ENCODE measurements at regions of chr13 and their contacts with region 1.

Region 1: GRCh38 chr13:25085125-25085742 is 10.7 kb upstream of the PABPC3 start:
- DNase-seq: no peak
- ATAC-seq: peak; percentile 91
- H3K4me3 ChIP-seq: no peak overlapping the region; the same call in 1 of the 2 replicates
- H3K27ac ChIP-seq: no peak overlapping the region
- H3K4me1 ChIP-seq: 0 out of 2 replicates have a peak, but pooled peaks cover 3% of the 10 kb centered on the region
- H3K27me3 ChIP-seq: no peaks in the 10 kb centered on the region; a peak in 1 of 4 replicates
- CTCF ChIP-seq: peak; percentile 62 to 75 (median 75)
- EP300 ChIP-seq: no peak
- POLR2A ChIP-seq: no peak
- RAD21 ChIP-seq: peak; percentile 81

Region 2: GRCh38 chr13:25032160-25032559 is 53.1 kb before region 1 on chr13:
- CTCF ChIA-PET with region 1: no interaction called
- POLR2A ChIA-PET with region 1: no interaction called
- RAD21 ChIA-PET with region 1: no interaction called
- SMC1A ChIA-PET with region 1: no interaction called
- in situ Hi-C with region 1: no loop called
- intact Hi-C with region 1: no loop called
- DNase-seq: no peak
- ATAC-seq: no peak
- H3K4me3 ChIP-seq: no peak overlapping the region
- H3K27ac ChIP-seq: no peak overlapping the region
- H3K4me1 ChIP-seq: no peaks in the 10 kb centered on the region; the same call in 1 of the 2 replicates
- H3K27me3 ChIP-seq: peaks cover 0 to 2% of the 10 kb centered on the region in 2 experiments; a peak in 2 of 4 replicates
- CTCF ChIP-seq: no peak
- EP300 ChIP-seq: no peak
- POLR2A ChIP-seq: no peak
- RAD21 ChIP-seq: no peak

Region 3: DNA sequence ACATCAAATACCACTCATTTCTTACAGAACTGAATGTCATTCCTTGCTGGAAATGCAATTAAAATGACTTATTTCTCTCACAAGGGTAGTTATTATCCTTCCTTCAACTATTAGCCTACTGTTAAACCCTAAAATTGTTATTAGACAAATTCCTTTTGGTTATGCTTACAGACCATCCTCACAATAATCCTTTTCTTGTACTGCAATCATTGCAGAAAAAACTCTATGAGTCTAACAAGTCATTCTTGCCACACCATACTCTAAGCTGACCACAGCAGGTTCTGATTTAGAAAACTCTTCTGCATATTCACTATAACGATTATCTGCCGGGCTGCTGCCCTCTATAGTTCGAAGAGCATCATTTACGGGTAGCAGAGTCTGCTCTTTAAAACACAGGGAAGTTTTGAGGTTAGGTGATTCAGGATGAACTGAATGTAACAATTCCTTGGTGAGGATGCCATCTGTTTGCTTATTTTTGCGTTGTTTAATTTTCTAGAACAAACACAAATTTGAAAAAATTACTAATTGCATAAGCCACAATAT is 163.8 kb after region 1 on chr13:
- CTCF ChIA-PET with region 1: interaction called, 5 read pairs
- POLR2A ChIA-PET with region 1: no interaction called
- RAD21 ChIA-PET with region 1: interaction called, 4 read pairs
- SMC1A ChIA-PET with region 1: interaction called, 4 read pairs
- in situ Hi-C with region 1: no loop called
- intact Hi-C with region 1: loop called (anchors 1 kb)
- DNase-seq: peak; percentile 17
- ATAC-seq: peak; percentile 91
- H3K4me3 ChIP-seq: no peak overlapping the region
- H3K27ac ChIP-seq: peak overlapping the region; percentile 21; the same call in 1 of the 2 replicates
- H3K4me1 ChIP-seq: peaks cover 18% of the 10 kb centered on the region
- H3K27me3 ChIP-seq: no peaks in the 10 kb centered on the region
- CTCF ChIP-seq: peak; percentile 45 to 66 (median 64); a peak in 5 of 6 replicates
- EP300 ChIP-seq: no peak
- POLR2A ChIP-seq: no peak
- RAD21 ChIP-seq: peak; percentile 86

Region 4: GRCh38 chr13:25375727-25376358 is 290.6 kb after region 1 on chr13:
- CTCF ChIA-PET with region 1: interaction called, 37 read pairs
- POLR2A ChIA-PET with region 1: no interaction called
- RAD21 ChIA-PET with region 1: interaction called, 10 read pairs
- SMC1A ChIA-PET with region 1: interaction called, 8 read pairs
- in situ Hi-C with region 1: loop called (anchors 10 kb)
- intact Hi-C with region 1: loop called (anchors 1 kb)
- DNase-seq: no peak
- ATAC-seq: peak; percentile 78
- H3K4me3 ChIP-seq: no peak overlapping the region
- H3K27ac ChIP-seq: no peak overlapping the region
- H3K4me1 ChIP-seq: no peaks in the 10 kb centered on the region
- H3K27me3 ChIP-seq: peaks cover 8 to 10% of the 10 kb centered on the region in 2 experiments; a peak in 3 of 4 replicates
- CTCF ChIP-seq: peak; percentile 57 to 65 (median 62); a peak in 5 of 6 replicates
- EP300 ChIP-seq: no peak
- POLR2A ChIP-seq: no peak
- RAD21 ChIP-seq: peak; percentile 67